Ascending aorta (tissue), 2 donors: ENCODE measurements at regions of chr17 and their contacts with region 1.

Region 1: GRCh38 chr17:79045842-79046196 is 21.9 kb downstream of the C1QTNF1 start:
- DNase-seq: peak in 1 of 2 donors; percentile 88
- H3K4me3 ChIP-seq: peak overlapping the region in 1 of 2 donors; percentile 43
- H3K27ac ChIP-seq: peak overlapping the region; percentile 46 to 68
- H3K4me1 ChIP-seq: peaks cover 10 to 17% of the 10 kb centered on the region in 2 donors
- H3K27me3 ChIP-seq: no peaks in the 10 kb centered on the region
- CTCF ChIP-seq: peak; percentile 92 to 98 (median 95)

Region 2: GRCh38 chr17:78993241-78993956 is 52.4 kb before region 1 on chr17:
- intact Hi-C with region 1: loop called (anchors 2 kb)
- DNase-seq: peak in 1 of 2 donors; percentile 73
- H3K4me3 ChIP-seq: no peak overlapping the region
- H3K27ac ChIP-seq: no peak overlapping the region
- H3K4me1 ChIP-seq: peaks cover 0 to 14% of the 10 kb centered on the region in 2 donors
- H3K27me3 ChIP-seq: no peaks in the 10 kb centered on the region
- CTCF ChIP-seq: peak; percentile 57 to 82 (median 72)

Region 3: DNA sequence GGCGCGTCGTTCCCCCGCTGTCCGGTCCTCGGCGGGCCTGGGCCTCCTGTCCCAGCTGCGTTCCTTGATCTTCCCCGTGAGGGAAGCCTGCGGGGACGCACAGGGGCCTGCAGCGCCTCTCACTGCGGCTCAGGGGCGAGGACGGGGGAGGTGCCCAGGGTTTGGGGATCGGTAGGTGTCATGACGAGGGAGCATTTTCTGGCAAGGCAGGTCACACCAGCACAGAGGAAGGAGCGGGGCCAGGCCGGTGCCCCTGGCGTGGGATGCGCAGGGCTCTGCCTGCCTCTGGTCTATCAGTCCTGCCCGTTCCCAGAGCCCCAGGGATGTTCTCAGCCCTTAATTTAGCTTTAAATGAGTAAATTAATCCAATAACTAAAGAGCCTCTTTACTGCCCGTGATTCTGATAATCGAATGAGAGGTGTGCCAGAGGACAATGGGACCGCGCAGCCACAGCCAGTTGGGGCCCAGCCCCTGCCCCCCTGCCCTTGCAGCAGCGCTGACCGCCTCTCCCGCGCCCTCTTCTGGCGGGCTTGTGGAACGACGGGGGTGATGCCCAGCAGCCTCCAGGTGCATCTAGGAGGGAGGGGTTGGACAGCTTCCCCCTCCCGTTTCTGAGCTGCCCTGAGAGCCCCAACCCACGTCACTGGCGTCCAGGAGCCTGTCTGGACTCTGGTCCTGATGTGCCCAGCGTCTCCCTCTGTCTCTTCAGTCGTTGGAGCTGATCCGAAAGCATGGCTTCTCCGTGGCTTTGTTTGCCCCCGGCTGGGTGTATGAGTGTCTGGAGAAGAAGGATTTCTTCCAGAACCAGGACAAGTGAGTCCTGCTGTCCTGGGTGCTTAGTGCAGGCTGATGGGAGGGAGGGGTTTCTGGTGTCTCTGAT is 36.7 kb after region 1 on chr17:
- intact Hi-C with region 1: loop called (anchors 1 kb)
- DNase-seq: no peak
- H3K4me3 ChIP-seq: no peak overlapping the region
- H3K27ac ChIP-seq: no peak overlapping the region
- H3K4me1 ChIP-seq: no peaks in the 10 kb centered on the region
- H3K27me3 ChIP-seq: no peaks in the 10 kb centered on the region
- CTCF ChIP-seq: peak; percentile 73 to 89 (median 83)